HCT116 (cell line): ENCODE measurements at regions of chr3 and their contacts with region 1.

Region 1: DNA sequence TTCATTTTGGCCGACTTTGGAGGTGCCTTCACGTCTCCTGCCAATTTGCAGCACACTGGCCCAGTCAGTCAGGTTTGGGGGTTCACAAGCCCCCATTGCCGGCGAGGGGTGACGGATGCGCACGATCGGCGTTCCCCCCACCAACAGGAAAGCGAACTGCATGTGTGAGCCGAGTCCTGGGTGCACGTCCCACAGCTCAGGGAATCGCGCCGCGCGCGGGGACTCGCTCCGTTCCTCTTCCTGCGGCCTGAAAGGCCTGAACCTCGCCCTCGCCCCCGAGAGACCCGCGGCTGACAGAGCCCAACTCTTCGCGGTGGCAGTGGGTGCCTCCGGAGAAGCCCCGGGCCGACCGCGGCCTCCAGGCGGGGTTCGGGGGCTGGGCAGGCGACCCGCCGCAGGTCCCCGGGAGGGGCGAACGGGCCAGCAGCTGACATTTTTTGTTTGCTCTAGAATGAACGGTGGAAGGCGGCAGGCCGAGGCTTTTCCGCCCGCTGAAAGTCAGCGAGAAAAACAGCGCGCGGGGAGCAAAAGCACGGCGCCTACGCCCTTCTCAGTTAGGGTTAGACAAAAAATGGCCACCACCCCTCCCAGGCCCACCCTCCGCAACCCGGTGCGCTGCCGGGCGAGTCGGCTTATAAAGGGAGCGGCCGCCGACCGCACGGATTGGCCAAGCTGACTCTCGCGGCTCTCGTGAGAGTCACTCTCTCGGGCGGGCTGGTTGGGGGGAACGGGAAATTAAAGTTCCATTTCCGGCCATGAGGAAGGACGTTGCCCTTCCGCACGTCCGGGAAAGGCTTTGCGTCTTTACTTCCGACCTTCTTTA is at the start of gene TERC:
- DNase-seq: peak; percentile 95
- ATAC-seq: peak; percentile 87
- H3K4me3 ChIP-seq: peak within 1 kb of the TSS; percentile 66 to 97
- H3K27ac ChIP-seq: peak within 1 kb of the TSS; percentile 98
- H3K4me1 ChIP-seq: peaks cover 7 to 18% of the 10 kb centered on the region in 2 experiments; a peak in 3 of 4 replicates
- H3K27me3 ChIP-seq: no peaks in the 10 kb centered on the region
- CTCF ChIP-seq: no peak
- POLR2A ChIP-seq: peak; percentile 87
- RAD21 ChIP-seq: no peak
- total RNA-seq, gene TERC: 47.0 TPM

Region 2: DNA sequence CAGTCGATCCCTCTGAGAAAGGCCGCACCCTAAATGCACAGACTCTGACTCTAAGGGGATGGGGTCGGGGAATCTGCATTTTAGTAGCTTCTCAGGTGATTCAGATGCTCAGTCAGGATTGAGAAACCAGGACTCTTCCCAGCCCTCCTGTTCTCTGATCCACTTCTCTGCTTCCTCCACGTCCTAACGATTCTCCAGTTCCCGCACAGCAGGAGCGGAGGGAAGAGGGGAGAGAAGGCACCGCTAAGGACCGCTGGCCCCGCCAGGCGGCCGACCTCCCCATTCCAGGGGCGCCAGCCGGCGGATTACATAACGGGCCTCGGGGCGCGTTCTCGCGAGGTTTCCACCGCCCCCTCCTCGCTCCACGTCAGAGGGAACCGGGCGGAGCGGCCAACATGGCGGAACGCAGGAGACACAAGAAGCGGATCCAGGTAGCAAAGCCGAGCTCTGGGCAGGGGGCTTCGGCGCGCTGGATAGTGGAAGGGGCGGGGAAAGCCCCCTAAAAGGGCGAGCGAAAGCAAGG is 201.8 kb after region 1 on chr3 and contains the start of gene SEC62:
- CTCF ChIA-PET with region 1: no interaction called
- POLR2A ChIA-PET with region 1: no interaction called
- RAD21 ChIA-PET with region 1: no interaction called
- intact Hi-C with region 1: loop called (anchors 5 kb)
- DNase-seq: peak; percentile 73
- ATAC-seq: peak; percentile 94
- H3K4me3 ChIP-seq: peak within 1 kb of the TSS; percentile 68 to 76
- H3K27ac ChIP-seq: peak within 1 kb of the TSS; percentile 53; the same call in 1 of the 2 replicates
- H3K4me1 ChIP-seq: peaks cover 3 to 15% of the 10 kb centered on the region in 2 experiments; a peak in 3 of 4 replicates
- H3K27me3 ChIP-seq: no peaks in the 10 kb centered on the region
- CTCF ChIP-seq: peak in 2 of 3 experiments; percentile 20 to 26; a peak in 2 of 6 replicates
- POLR2A ChIP-seq: peak; percentile 80
- RAD21 ChIP-seq: peak; percentile 42
- total RNA-seq, gene SEC62: 55.4 TPM

Region 3: GRCh38 chr3:170037463-170038433 is 273.1 kb after region 1 on chr3 and contains the start of gene GPR160:
- CTCF ChIA-PET with region 1: no interaction called
- POLR2A ChIA-PET with region 1: interaction called, 3 read pairs
- RAD21 ChIA-PET with region 1: no interaction called
- intact Hi-C with region 1: loop called (anchors 2 kb)
- DNase-seq: peak; percentile 64
- ATAC-seq: peak; percentile 92
- H3K4me3 ChIP-seq: peak within 1 kb of the TSS; percentile 60 to 72
- H3K27ac ChIP-seq: peak within 1 kb of the TSS; percentile 39; the same call in 1 of the 2 replicates
- H3K4me1 ChIP-seq: peaks cover 4 to 16% of the 10 kb centered on the region in 2 experiments; a peak in 2 of 4 replicates
- H3K27me3 ChIP-seq: no peaks in the 10 kb centered on the region
- CTCF ChIP-seq: peak; percentile 78 to 81 (median 78)
- POLR2A ChIP-seq: no peak
- RAD21 ChIP-seq: peak; percentile 64
- total RNA-seq, gene GPR160: 9.9 TPM

Region 4: DNA sequence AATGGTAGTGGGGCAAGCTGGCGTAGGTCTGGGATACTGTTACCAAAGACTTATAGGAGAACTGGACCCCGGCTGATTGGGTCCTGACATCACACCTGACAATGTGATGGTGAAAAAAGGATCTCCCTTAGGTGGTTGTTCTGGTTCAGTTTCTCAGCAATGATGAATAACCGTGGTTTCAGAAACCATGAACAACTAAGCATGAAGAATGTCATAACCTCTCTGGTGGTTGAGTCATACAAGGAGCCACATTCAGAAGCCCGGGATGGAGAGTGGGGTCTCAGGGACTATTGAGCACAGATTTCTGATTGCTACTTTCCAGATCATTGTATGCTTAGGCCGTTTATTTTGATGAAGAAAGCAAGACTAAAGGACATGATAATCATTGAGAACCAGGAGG is 290.5 kb after region 1 on chr3:
- CTCF ChIA-PET with region 1: no interaction called
- POLR2A ChIA-PET with region 1: no interaction called
- RAD21 ChIA-PET with region 1: no interaction called
- intact Hi-C with region 1: loop called (anchors 5 kb)
- DNase-seq: no peak
- ATAC-seq: no peak
- H3K4me3 ChIP-seq: no peak overlapping the region
- H3K27ac ChIP-seq: no peak overlapping the region
- H3K4me1 ChIP-seq: no peaks in the 10 kb centered on the region
- H3K27me3 ChIP-seq: no peaks in the 10 kb centered on the region
- CTCF ChIP-seq: no peak
- POLR2A ChIP-seq: no peak
- RAD21 ChIP-seq: no peak

Region 5: DNA sequence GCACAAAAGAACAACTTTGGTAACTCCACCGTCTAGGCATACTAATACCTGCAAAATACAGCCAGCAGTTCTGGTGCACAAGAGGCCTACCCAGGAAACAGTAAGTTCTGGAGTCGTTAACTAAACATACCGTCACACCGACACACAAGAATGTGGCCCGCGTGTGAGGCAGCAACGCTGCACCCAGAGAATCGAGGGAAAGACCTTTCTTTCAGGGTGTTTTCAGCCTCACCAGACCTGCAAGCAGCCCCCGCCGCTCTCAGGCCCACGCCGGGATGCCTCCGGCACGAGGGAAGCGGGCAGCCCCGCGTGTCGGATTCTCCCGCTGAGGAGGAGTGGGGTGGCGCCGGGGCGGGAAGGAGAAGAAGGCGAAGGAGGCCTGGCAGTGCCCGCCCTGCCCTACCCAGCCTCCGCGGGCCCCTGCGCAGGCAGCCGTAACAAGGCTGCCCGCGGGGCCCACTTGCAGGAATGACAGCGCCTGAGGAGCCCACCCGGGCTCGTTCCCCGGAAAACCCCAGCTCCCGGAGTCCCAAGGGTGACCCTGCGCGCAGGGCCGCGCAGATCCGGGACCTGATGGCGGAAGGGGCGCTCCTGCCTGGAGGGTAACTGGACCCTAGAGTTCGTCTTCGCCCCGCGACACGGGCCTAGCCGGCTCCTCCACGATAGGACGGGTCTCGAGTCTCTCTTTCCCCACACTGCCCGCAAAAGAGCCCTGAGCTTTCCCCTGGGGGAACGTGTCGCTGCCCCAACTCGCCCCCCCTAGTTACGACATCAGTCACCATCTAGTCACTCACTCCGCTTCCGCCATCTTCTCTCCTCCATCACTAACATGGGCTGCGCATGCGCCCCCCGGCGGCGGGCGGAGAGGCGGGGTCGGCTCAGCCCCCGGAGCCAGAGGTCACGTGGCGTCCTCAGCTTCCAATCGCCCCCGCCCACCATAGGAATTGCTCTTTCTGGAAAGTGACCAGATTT is 416.5 kb after region 1 on chr3 and contains the start of gene PHC3:
- CTCF ChIA-PET with region 1: no interaction called
- POLR2A ChIA-PET with region 1: no interaction called
- RAD21 ChIA-PET with region 1: no interaction called
- intact Hi-C with region 1: loop called (anchors 10 kb)
- DNase-seq: peak; percentile 75
- ATAC-seq: peak; percentile 89
- H3K4me3 ChIP-seq: peak within 1 kb of the TSS; percentile 88 to 94
- H3K27ac ChIP-seq: peak within 1 kb of the TSS; percentile 57
- H3K4me1 ChIP-seq: peaks cover 8 to 19% of the 10 kb centered on the region in 2 experiments
- H3K27me3 ChIP-seq: no peaks in the 10 kb centered on the region
- CTCF ChIP-seq: no peak
- POLR2A ChIP-seq: peak; percentile 47
- RAD21 ChIP-seq: no peak
- total RNA-seq, gene PHC3: 40.1 TPM